H1 (cell line): ENCODE measurements at regions of chr3 and their contacts with region 1.

Region 1: GRCh38 chr3:62436785-62437184 is 63.4 kb upstream of the FEZF2 start:
- DNase-seq: no peak
- H3K4me3 ChIP-seq: no peak overlapping the region
- H3K27ac ChIP-seq: no peak overlapping the region
- H3K4me1 ChIP-seq: peaks cover 2 to 18% (median 16%) of the 10 kb centered on the region in 4 experiments; a peak in 6 of 7 replicates
- H3K27me3 ChIP-seq: peaks cover 0 to 4% (median 2%) of the 10 kb centered on the region in 4 experiments; a peak in 2 of 7 replicates
- CTCF ChIP-seq: no peak
- EP300 ChIP-seq: no peak
- POLR2A ChIP-seq: no peak
- RAD21 ChIP-seq: no peak

Region 2: GRCh38 chr3:62299857-62300406 is 136.9 kb before region 1 on chr3:
- CTCF ChIA-PET with region 1: no interaction called
- POLR2A ChIA-PET with region 1: no interaction called
- DNase-seq: no peak
- H3K4me3 ChIP-seq: no peak overlapping the region
- H3K27ac ChIP-seq: no peak overlapping the region
- H3K4me1 ChIP-seq: no peaks in the 10 kb centered on the region
- H3K27me3 ChIP-seq: no peaks in the 10 kb centered on the region
- CTCF ChIP-seq: no peak
- EP300 ChIP-seq: no peak
- POLR2A ChIP-seq: no peak
- RAD21 ChIP-seq: no peak

Region 3: GRCh38 chr3:62355703-62356102 is 81.1 kb before region 1 on chr3:
- CTCF ChIA-PET with region 1: no interaction called
- POLR2A ChIA-PET with region 1: no interaction called
- DNase-seq: no peak
- H3K4me3 ChIP-seq: no peak overlapping the region
- H3K27ac ChIP-seq: no peak overlapping the region
- H3K4me1 ChIP-seq: no peaks in the 10 kb centered on the region
- H3K27me3 ChIP-seq: peaks cover 5 to 42% (median 27%) of the 10 kb centered on the region in 4 experiments
- CTCF ChIP-seq: no peak
- EP300 ChIP-seq: no peak
- POLR2A ChIP-seq: no peak
- RAD21 ChIP-seq: no peak

Region 4: DNA sequence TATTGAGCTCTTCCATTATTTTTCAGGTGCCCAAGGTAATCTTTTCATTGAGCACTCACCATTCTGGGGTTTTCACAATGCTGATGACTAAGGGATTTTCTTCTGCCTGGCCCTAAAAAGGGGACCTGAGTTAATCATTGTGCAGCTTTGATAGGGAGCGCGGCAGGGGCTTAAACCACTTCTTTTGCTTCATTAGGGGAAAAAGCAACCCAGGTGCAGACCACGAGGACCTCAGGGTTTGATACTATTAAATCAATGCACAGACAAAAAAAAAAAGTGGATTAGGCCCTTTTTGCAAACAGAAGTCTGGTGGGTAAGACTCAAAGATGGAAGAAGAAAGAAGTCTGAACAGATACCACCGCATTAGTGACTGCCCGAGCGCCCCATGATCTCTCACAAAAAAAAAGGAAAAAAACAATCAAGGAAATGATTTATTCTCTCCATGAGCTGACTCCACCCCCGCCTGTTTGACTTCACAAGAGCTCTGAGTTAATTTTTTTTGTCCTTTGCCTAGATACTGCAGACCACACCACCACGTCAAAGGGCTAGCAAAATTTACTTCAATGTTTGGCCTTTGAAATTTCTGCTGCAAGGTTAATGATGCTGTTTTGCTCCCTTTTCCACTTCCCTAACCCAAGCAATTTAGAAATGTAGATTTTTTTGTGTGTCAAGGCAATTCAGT is 14.6 kb after region 1 on chr3:
- CTCF ChIA-PET with region 1: interaction called, 14 read pairs
- POLR2A ChIA-PET with region 1: interaction called, 3 read pairs
- DNase-seq: no peak
- H3K4me3 ChIP-seq: no peak overlapping the region
- H3K27ac ChIP-seq: no peak overlapping the region
- H3K4me1 ChIP-seq: peaks cover 3 to 11% (median 5%) of the 10 kb centered on the region in 4 experiments; a peak in 4 of 7 replicates
- H3K27me3 ChIP-seq: no peaks in the 10 kb centered on the region
- CTCF ChIP-seq: no peak
- EP300 ChIP-seq: no peak
- POLR2A ChIP-seq: no peak
- RAD21 ChIP-seq: no peak